Thyroid gland (tissue), 4 donors: ENCODE measurements at regions of chr22 and their contacts with region 1.

Region 1: DNA sequence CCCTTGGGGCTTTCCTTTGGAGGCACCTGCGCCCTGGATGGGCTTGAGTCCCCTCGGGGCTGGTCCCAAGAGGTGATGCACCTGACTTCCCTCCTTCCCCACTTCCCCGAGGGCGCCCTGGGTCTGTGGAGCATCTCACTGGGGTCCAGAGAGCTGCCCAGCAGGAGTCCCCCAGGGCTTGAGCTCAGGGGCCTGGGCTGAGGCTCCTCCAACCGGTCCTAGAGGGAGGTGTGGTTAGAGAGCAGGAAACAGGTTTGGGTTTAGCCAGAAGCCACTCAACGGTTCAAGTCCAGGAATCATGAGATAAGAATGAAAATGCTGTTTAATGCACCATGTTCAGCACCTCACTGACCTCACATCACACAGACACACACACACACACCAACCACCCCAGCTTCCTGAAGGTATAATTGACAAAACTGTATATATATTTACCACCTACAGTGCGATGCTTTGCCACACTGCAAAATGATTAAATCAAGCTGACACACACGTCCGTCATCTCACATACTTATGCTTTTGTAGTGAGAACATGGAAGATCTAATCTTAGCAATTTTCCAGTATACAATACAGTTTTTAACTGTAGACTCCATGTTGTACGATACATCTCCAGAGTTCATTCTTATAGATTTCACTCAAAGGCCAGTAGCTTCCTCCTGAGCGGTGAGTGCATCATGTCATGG is 628 bp upstream of the IGLL1 start:
- DNase-seq: no peak
- H3K4me3 ChIP-seq: no peak overlapping the region
- H3K27ac ChIP-seq: no peak overlapping the region
- H3K4me1 ChIP-seq: no peaks in the 10 kb centered on the region
- H3K27me3 ChIP-seq: no peaks in the 10 kb centered on the region
- CTCF ChIP-seq: no peak
- POLR2A ChIP-seq: no peak

Region 2: GRCh38 chr22:23402275-23403151 is 178.2 kb before region 1 on chr22:
- intact Hi-C with region 1: no loop called
- DNase-seq: peak; percentile 83
- H3K4me3 ChIP-seq: no peak overlapping the region
- H3K27ac ChIP-seq: no peak overlapping the region
- H3K4me1 ChIP-seq: peaks cover 0 to 15% of the 10 kb centered on the region in 2 donors
- H3K27me3 ChIP-seq: no peaks in the 10 kb centered on the region
- CTCF ChIP-seq: peak in 4 of 6 experiments; percentile 32 to 68 (median 59)
- POLR2A ChIP-seq: peak in 1 of 2 donors; percentile 24

Region 3: GRCh38 chr22:23548501-23549197 is 32.1 kb before region 1 on chr22:
- intact Hi-C with region 1: loop called (anchors 5 kb)
- DNase-seq: no peak
- H3K4me3 ChIP-seq: no peak overlapping the region
- H3K27ac ChIP-seq: no peak overlapping the region
- H3K4me1 ChIP-seq: no peaks in the 10 kb centered on the region
- H3K27me3 ChIP-seq: no peaks in the 10 kb centered on the region
- CTCF ChIP-seq: no peak
- POLR2A ChIP-seq: no peak

Region 4: DNA sequence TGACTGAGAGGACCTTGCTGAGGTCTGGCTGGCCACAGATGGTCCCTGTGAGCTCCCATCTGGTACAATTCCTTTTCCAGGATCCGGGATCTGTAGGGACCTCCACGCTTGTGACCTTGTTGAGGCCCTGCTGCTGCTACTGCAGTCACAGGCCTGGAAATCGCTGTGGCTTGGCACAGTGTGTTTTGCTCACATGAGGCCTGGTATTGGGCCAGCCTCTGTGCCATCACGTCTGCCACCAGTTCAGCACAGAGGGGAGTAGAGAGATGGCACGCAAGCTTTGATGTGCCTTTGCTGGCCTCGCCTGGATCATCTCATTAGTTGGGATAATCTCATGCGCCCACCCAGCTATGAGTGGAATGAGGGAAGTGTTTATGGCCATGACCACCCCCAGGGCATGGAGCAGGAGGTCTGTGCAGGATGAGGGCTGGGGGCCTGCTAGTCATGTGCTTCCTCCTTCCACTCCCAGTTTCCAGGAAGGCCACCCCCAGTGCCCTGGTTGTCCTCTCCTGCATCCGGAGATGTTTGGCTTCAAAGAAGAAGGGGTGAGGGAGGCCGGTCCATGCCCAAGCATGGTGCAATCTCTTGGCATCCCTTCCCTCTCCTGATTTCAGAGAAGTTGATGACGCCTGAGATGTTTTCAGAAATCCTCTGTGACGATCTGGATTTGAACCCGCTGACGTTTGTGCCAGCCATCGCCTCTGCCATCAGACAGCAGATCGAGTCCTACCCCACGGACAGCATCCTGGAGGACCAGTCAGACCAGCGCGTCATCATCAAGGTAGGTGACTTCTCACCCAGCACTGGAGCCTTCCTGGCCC is 235.6 kb after region 1 on chr22:
- intact Hi-C with region 1: no loop called
- DNase-seq: no peak
- H3K4me3 ChIP-seq: no peak overlapping the region
- H3K27ac ChIP-seq: no peak overlapping the region
- H3K4me1 ChIP-seq: peaks cover 0 to 13% of the 10 kb centered on the region in 2 donors
- H3K27me3 ChIP-seq: no peaks in the 10 kb centered on the region
- CTCF ChIP-seq: no peak
- POLR2A ChIP-seq: no peak